Posterior cingulate gyrus (tissue), 11 donors: ENCODE measurements at regions of chr16 and their contacts with region 1.

Region 1: GRCh38 chr16:85114909-85115567 is 2.8 kb upstream of the CIBAR2 start:
- DNase-seq: peak; percentile 66 to 97 (median 89)

Region 2: GRCh38 chr16:85220125-85220839 is 105.2 kb after region 1 on chr16:
- intact Hi-C with region 1: no loop called
- DNase-seq: peak; percentile 35 to 97 (median 73)

Region 3: DNA sequence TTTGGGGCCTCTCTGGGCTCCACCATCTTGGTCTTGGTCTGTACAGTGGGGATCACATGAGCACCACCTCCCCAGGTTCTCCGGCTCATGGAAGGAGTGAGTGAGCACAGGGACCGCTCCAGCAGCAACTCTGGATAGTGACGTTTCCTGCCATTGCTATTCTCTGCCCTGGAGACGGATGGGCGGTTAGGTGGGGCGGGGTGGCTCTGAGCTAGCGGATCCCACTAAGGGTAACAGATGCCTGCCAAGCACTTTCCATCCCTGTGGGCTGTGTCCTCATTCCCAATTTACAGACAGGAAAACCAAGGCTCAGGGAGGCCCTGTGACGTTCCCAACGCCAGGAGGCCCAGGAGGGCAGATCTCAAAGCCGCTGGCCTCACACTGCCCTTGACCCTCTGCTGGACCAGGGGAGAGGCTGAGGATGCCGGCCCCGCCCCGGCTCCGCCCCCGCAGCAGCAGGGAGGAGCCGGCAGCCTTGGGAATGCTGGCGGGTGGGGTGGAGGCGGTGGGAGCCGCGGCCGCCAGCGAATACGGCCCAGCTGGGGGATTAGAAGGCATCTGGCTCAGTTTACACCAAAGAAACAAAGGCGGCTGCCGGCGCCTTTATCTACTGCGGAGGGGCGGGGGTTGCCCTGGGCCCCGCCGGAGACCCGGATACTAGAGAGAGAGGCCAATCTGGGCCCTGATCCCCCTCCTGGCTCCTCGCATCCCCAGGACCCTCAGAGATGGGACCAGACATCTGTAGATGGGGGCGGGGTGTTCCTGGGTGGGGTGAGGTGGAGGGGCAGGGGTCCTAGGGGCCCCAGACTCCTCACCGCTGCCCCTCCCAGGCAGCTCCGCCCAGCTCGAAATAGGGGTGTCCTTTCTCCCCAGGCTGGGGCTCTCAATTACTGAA is 119.5 kb after region 1 on chr16:
- intact Hi-C with region 1: loop called (anchors 10 kb)
- DNase-seq: no peak

Region 4: DNA sequence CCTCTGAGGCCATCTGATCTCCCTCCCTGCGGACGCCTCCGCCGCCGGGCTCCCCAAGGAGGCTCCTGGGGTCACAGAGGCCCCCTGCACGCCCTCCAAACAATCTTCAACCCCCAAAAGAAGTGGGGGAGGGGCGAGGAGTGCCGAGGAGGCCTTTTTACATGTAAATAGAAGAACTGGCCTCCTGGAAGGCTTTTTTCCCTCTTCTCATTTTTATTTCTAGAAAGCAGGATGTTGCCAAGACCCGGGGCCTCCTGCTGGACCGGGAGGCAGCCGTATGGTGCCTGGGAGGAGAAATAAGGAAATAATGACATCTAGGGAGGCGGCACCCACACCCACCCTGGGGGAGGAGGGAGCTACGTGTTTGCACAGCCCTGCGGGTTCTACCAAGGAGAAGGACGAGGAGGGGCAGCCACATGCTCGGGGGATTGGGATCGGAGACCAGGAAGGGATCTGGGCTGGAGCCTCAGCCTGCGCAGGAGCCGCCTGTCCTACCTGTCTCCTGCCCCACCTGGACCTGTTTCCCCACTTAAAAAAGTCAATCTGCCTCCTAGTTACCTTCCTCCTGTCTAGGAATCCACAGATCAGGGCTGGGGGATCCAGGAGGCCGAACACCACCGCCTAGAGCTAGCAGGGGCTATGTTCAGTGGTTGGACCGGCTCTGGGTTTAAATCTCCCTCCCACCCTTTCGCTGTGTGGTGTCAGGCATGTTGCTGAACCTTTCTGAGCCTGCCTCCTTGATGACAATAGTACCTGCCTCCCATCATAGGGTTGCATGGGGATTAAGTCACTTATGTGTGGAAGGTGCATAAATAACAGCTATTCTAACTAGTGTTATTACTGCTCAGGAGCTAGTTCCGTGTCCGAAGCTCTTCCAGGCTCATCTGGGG is 322.4 kb after region 1 on chr16:
- intact Hi-C with region 1: no loop called
- DNase-seq: peak in 1 of 10 donors; percentile 84

Region 5: DNA sequence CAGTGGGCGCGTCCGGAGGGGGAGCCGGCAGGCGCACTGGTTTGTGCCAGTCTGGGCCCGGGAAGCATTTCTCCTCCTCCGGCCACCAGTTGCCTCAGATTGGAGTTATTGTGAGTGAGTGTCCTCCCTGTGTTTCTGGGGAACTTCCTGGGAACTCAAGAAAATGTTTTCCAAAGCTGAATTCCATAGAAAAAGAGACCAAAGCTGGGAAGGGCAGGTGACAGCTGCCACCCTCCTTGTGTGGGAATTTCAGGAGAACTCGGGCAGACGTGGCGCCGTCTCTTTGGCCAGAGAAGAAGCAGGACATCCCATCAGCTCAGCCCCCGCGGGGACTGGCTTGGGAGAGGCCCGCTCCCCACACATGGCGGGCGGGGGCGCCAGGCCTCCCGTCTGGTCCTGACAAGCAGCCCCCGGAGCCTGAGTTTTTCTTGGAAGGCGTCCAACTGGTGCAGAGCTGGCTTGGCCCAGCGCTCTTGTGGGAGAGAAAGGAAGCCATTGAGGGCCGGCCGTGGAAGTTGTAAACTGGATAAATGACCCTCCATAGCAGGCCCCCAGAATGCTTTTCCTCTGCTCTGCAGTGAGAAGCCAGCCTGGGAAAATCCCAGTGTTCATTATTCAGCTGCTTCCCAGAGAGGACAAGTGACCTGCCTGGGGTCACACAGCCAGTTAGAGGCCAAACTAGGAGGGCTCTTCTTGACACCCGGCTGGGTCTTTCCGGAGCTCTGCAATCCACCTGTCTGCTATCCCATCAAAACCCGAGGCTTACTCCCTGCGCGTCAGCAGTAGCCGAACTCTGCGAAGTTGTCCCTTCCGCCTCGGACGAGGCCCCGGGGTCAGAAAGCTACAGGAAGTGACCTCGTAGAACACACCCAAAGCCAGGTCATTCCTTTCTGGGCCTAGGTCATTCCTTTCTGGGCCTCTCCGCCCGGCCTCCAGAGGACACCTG is 458.9 kb after region 1 on chr16:
- intact Hi-C with region 1: no loop called
- DNase-seq: peak in 4 of 10 donors; percentile 40 to 90 (median 74)